ENCODE measurements at regions of chr16 and their contacts with region 1.

Region 1: GRCh38 chr16:71441348-71441781 is 489 bp downstream of the TLE7 start:
- DNase-seq: no peak
- H3K4me3 ChIP-seq: no peak overlapping the region
- H3K27ac ChIP-seq: no peak overlapping the region
- H3K4me1 ChIP-seq: no peaks in the 10 kb centered on the region
- H3K27me3 ChIP-seq: no peaks in the 10 kb centered on the region
- CTCF ChIP-seq: no peak
- EP300 ChIP-seq: no peak
- POLR2A ChIP-seq: no peak

Region 2: GRCh38 chr16:71626018-71626857 is 184.9 kb after region 1 on chr16 and contains the start of gene MARVELD3:
- intact Hi-C with region 1: no loop called
- DNase-seq: peak; percentile 25 to 64 (median 36)
- H3K4me3 ChIP-seq: peak within 1 kb of the TSS; percentile 42
- H3K27ac ChIP-seq: no peak within 1 kb of the TSS
- H3K4me1 ChIP-seq: peaks cover 10% of the 10 kb centered on the region
- H3K27me3 ChIP-seq: no peaks in the 10 kb centered on the region
- CTCF ChIP-seq: no peak
- EP300 ChIP-seq: no peak
- POLR2A ChIP-seq: no peak
- total RNA-seq, gene MARVELD3: 0.10 to 9.2 (median 0.68) TPM in 6 of 7 donors, not detected in the other

Region 3: GRCh38 chr16:71681360-71681980 is 240.1 kb after region 1 on chr16:
- intact Hi-C with region 1: no loop called
- DNase-seq: no peak
- H3K4me3 ChIP-seq: no peak overlapping the region
- H3K27ac ChIP-seq: no peak overlapping the region
- H3K4me1 ChIP-seq: no peaks in the 10 kb centered on the region
- H3K27me3 ChIP-seq: no peaks in the 10 kb centered on the region
- CTCF ChIP-seq: no peak
- EP300 ChIP-seq: no peak
- POLR2A ChIP-seq: no peak

Region 4: GRCh38 chr16:71845639-71846430 is 404.5 kb after region 1 on chr16 and contains the start of gene ATXN1L:
- intact Hi-C with region 1: no loop called
- DNase-seq: peak; percentile 88 to 95 (median 91)
- H3K4me3 ChIP-seq: peak within 1 kb of the TSS; percentile 83
- H3K27ac ChIP-seq: peak within 1 kb of the TSS; percentile 63 to 67
- H3K4me1 ChIP-seq: peaks cover 2% of the 10 kb centered on the region
- H3K27me3 ChIP-seq: no peaks in the 10 kb centered on the region
- CTCF ChIP-seq: peak in 2 of 3 donors; percentile 9 to 27
- EP300 ChIP-seq: no peak
- POLR2A ChIP-seq: peak; percentile 88
- total RNA-seq, gene ATXN1L: 12.5 to 29.5 (median 26.0) TPM

Region 5: GRCh38 chr16:72256398-72257054 is 815.2 kb after region 1 on chr16:
- intact Hi-C with region 1: loop called in 1 of 4 experiments (anchors 5 kb)
- DNase-seq: peak in 1 of 5 donors; percentile 44
- H3K4me3 ChIP-seq: no peak overlapping the region
- H3K27ac ChIP-seq: no peak overlapping the region
- H3K4me1 ChIP-seq: no peaks in the 10 kb centered on the region
- H3K27me3 ChIP-seq: no peaks in the 10 kb centered on the region
- CTCF ChIP-seq: no peak
- EP300 ChIP-seq: no peak
- POLR2A ChIP-seq: no peak

Measured in ovary (tissue), 10 donors.